Motor neuron (in vitro differentiated cells): ENCODE measurements at regions of chr16 and their contacts with region 1.

Region 1: DNA sequence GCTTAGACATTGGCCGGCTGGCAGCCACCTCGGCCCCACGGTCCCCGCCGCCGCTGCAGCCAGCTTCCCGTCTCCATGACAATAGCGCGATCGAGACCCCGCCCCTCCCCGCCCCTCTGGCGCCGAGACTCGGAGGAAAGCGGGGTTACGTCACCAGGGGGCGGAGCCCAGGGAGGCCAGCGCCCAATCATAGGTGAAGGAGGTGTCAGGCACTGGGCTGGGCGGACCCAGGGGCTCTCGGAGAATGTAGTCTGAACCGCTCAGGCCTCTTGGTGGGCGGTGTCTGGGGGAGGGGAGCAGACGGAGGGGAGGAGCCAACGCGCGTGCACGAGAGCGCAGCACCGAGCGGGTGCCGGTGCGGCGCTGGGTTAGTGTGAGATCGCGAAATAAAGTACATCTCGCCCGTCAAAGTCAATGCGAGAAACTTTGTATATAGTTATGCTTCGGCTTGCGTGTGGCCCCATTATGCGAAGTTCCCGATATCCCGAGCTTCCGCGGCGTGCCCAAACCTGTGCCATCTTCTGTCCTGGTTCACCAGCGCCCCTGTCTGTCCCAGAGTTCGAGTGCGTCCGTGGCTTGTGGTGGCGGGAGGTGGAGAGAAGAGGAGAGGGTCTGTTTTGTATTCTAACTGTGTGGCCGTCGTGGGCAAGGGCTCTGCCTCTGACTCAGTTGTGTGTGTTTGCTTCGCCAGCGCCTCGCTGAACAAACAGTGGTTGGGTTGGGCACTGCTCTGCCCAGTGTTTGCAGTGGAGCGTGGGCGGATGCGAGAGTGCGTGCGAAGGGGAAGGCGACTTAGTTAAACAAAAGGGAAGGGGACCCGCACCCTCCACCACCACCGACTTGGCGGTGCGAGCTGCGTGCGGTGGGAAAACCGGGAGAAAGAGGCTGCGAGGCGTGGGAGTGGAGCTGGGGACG is 1.3 kb upstream of the IRX5 start:
- ATAC-seq: peak; percentile 71 to 86 (median 83)
- H3K4me3 ChIP-seq: peak overlapping the region; percentile 61 to 96 (median 82)
- H3K27ac ChIP-seq: peak overlapping the region; percentile 94 to 96
- H3K4me1 ChIP-seq: peaks cover 4 to 5% of the 10 kb centered on the region in 2 donors

Region 2: GRCh38 chr16:53549970-53550690 is 1379.2 kb before region 1 on chr16:
- in situ Hi-C with region 1: loop called in 1 of 9 experiments (anchors 25 kb)
- ATAC-seq: peak; percentile 78 to 99 (median 87)
- H3K4me3 ChIP-seq: no peak overlapping the region
- H3K27ac ChIP-seq: no peak overlapping the region
- H3K4me1 ChIP-seq: peaks cover 9 to 16% of the 10 kb centered on the region in 2 donors

Region 3: GRCh38 chr16:54062361-54063278 is 866.7 kb before region 1 on chr16:
- in situ Hi-C with region 1: loop called in 1 of 9 experiments (anchors 25 kb)
- ATAC-seq: peak in 5 of 8 experiments; percentile 39 to 72 (median 59)
- H3K4me3 ChIP-seq: no peak overlapping the region
- H3K27ac ChIP-seq: peak overlapping the region; percentile 16 to 19
- H3K4me1 ChIP-seq: peaks cover 38 to 83% of the 10 kb centered on the region in 2 donors

Region 4: DNA sequence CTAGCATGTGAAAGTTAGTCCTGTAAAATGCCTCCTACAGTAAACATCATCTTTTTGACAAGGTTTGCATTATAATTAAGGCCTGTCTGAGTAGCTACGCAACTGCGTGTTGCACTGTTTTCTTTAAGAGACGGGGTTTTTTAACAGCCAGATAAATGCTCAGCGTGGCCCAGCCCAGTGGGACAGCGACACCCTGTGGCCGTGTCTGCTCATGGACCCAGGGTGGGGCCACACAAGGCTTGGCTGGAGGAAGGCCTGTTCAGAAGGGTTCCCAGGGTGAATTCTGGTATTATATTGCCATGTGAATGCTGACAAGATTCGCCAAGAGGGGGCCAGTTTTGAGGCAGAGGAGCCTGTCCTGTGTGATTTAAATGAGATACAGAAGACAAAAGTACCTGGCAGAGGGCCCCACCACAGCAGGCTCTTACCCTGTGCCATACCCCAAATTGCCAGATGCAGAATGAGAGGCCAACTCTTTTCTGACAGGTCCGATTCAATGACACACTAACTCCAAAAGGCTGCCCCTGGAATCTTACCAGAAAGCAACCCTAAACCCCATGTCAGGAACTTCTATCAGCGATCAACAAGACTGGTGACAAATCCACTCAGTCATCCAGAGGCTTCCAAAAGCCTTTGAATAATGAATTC is 328.7 kb after region 1 on chr16:
- in situ Hi-C with region 1: loop called in 1 of 9 experiments (anchors 25 kb)
- ATAC-seq: peak in 3 of 8 experiments; percentile 99 to 100 (median 100)
- H3K4me3 ChIP-seq: no peak overlapping the region
- H3K27ac ChIP-seq: no peak overlapping the region
- H3K4me1 ChIP-seq: peaks cover 4 to 21% of the 10 kb centered on the region in 2 donors

Region 5: DNA sequence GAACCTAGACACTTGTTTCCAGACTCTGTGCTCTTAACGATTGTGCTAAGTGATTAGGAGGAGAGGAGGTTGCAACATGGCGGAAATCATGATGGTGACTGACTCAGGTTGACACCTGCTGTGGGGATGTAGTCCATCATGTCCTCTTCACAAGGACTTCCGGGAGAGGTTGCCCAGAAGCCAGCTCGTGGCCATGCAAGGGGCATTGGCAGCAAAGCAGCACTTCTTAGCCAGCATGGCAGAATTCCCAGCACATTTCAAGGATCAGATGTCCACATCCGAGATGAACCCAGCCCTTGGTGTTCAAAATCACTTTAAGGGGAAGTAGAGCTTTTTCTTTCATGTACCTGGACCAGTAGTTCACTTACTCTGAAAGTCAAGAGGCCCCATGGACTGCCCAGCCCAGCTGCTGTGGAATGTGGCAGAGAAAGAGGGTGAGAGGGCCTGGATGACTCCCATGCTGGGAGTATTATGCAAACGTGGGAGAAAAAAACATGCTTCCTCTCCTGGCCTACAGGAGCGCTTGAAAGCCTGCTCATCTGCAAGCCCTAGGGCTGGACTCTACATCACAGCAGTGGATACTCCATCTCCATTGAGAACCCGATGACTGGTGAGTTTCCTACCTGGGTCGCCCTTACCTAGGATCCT is 460.2 kb after region 1 on chr16:
- in situ Hi-C with region 1: loop called in 2 of 9 experiments (anchors 25 kb)
- ATAC-seq: peak in 1 of 8 experiments; percentile 30
- H3K4me3 ChIP-seq: no peak overlapping the region
- H3K27ac ChIP-seq: no peak overlapping the region
- H3K4me1 ChIP-seq: peaks cover 18 to 66% of the 10 kb centered on the region in 2 donors